Ascending aorta (tissue), 2 donors: ENCODE measurements at regions of chr17 and their contacts with region 1.

Region 1: DNA sequence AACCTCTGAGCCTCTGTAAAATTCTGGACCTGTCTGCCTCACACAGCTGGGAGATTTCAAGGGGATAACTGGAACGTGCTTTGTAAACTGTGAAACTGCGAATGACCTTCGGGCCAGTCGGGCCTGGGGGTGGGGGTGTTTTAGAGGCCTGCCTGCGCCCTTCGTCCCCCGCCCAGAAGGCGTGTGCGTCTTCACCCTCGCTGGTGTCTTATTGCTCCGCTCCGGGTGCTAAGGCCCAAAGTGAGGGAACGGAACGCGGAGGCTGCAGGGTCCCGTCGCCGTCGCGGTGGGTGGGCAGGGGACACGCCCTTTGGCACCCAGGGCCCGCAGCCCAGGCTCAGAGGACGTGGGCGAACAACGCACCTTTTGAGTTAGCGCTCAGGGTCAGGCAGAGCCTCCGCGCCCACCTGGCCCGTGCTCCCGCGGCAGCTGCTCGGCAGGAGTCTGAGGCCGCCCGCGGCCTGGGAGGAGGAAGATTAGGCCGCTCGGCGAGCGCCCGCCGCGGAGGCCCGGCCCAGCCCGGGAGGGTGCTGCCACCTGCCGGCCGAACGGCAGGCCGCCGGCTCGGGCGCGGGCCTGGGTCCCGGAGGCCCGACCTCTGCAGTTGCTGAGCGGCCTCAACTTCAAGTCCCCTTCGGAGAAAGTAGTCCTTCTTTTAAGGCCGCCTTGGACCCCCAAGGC is 29.7 kb downstream of the DCAKD start:
- DNase-seq: peak in 1 of 2 donors; percentile 76
- H3K4me3 ChIP-seq: peak overlapping the region; percentile 46 to 68
- H3K27ac ChIP-seq: peak overlapping the region; percentile 7 to 83
- H3K4me1 ChIP-seq: peaks cover 5 to 21% of the 10 kb centered on the region in 2 donors
- H3K27me3 ChIP-seq: no peaks in the 10 kb centered on the region
- CTCF ChIP-seq: peak; percentile 64 to 97 (median 70)

Region 2: DNA sequence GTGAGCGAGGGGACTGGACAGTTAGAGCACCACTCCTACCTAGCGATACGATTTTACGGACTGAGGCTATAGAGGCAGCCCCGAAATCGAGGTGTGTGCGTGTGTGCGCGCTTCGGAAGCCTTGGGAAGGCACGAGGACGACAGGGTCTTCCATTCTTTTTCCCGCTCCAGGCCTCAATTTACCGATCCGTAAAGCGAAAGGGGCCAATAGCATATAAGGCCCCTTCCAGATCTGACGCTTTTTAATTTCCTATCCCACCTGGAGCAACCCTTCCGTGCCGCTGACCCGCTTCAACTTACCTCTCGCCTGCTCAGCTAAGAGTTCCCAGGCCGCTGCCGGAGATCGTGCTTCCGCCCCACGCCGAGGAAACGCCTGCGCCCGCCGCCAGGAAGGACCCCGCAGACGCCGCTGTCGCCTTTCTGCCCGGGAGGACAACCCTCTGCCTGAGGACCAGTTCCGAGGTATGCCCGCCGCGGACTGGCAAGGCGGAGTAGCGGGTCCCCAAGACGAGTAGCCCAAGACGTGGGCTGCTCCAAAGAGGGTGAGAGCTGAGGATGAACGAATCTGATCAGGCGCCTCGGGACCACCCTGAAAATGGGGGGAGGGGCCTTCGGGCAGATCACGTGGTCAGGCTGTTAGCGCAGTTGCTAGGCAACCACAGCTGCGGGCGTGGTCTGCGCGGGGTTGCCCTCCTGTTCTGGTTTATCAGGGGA is 122.5 kb before region 1 on chr17 and contains the start of gene EFTUD2:
- intact Hi-C with region 1: loop called (anchors 1 kb)
- DNase-seq: peak; percentile 57 to 94
- H3K4me3 ChIP-seq: peak within 1 kb of the TSS; percentile 75 to 76
- H3K27ac ChIP-seq: peak within 1 kb of the TSS; percentile 89 to 96
- H3K4me1 ChIP-seq: peaks cover 0 to 15% of the 10 kb centered on the region in 2 donors
- H3K27me3 ChIP-seq: no peaks in the 10 kb centered on the region
- CTCF ChIP-seq: no peak
- total RNA-seq, gene EFTUD2: 126 TPM

Region 3: GRCh38 chr17:44947461-44948314 is 74.1 kb before region 1 on chr17 and contains the start of gene KIF18B:
- intact Hi-C with region 1: loop called (anchors 1 kb)
- DNase-seq: peak; percentile 59 to 94
- H3K4me3 ChIP-seq: peak within 1 kb of the TSS; percentile 66 to 74
- H3K27ac ChIP-seq: no peak within 1 kb of the TSS
- H3K4me1 ChIP-seq: peaks cover 6 to 8% of the 10 kb centered on the region in 2 donors
- H3K27me3 ChIP-seq: no peaks in the 10 kb centered on the region
- CTCF ChIP-seq: no peak
- total RNA-seq, gene KIF18B: not detected

Region 4: GRCh38 chr17:45098869-45099616 is 77.3 kb after region 1 on chr17:
- intact Hi-C with region 1: loop called (anchors 1 kb)
- DNase-seq: peak; percentile 63 to 97
- H3K4me3 ChIP-seq: peak overlapping the region in 1 of 2 donors; percentile 9
- H3K27ac ChIP-seq: peak overlapping the region; percentile 64 to 80
- H3K4me1 ChIP-seq: peaks cover 16 to 45% of the 10 kb centered on the region in 2 donors
- H3K27me3 ChIP-seq: no peaks in the 10 kb centered on the region
- CTCF ChIP-seq: peak; percentile 85 to 96 (median 91)